ENCODE measurements at regions of chr5 and their contacts with region 1.

Region 1: DNA sequence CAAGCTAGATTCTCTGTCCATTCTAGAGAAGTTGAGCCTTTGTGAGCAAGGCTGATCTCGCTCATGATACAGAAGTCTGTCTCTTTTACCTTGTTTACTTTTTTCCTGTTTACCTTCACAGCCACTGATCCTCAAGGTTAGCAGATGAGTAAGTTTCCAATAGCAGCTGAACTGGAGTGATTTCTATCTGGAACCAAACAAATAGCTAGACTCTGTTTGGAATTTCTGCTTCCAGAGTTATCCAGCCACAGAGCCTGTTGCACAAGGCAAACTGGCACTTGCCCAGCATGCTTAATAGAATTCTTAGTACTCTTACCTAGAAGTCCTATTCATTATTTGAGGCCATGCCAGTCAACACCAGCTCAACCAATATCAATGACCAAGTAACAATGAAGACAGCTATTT is 12.8 kb upstream of the PANK3 start:
- DNase-seq: no peak
- ATAC-seq: no peak
- H3K4me3 ChIP-seq: no peak overlapping the region
- H3K27ac ChIP-seq: no peak overlapping the region
- H3K4me1 ChIP-seq: no peaks in the 10 kb centered on the region
- H3K27me3 ChIP-seq: peaks cover 6% of the 10 kb centered on the region
- CTCF ChIP-seq: no peak

Region 2: GRCh38 chr5:168317521-168318147 is 274.4 kb before region 1 on chr5:
- CTCF ChIA-PET with region 1: interaction called, 10 read pairs
- POLR2A ChIA-PET with region 1: no interaction called
- in situ Hi-C with region 1: no loop called
- intact Hi-C with region 1: no loop called
- DNase-seq: peak; percentile 53
- ATAC-seq: peak; percentile 50
- H3K4me3 ChIP-seq: no peak overlapping the region
- H3K27ac ChIP-seq: peak overlapping the region; percentile 19; the same call in 1 of the 2 replicates
- H3K4me1 ChIP-seq: peaks cover 28% of the 10 kb centered on the region
- H3K27me3 ChIP-seq: no peaks in the 10 kb centered on the region
- CTCF ChIP-seq: no peak

Region 3: DNA sequence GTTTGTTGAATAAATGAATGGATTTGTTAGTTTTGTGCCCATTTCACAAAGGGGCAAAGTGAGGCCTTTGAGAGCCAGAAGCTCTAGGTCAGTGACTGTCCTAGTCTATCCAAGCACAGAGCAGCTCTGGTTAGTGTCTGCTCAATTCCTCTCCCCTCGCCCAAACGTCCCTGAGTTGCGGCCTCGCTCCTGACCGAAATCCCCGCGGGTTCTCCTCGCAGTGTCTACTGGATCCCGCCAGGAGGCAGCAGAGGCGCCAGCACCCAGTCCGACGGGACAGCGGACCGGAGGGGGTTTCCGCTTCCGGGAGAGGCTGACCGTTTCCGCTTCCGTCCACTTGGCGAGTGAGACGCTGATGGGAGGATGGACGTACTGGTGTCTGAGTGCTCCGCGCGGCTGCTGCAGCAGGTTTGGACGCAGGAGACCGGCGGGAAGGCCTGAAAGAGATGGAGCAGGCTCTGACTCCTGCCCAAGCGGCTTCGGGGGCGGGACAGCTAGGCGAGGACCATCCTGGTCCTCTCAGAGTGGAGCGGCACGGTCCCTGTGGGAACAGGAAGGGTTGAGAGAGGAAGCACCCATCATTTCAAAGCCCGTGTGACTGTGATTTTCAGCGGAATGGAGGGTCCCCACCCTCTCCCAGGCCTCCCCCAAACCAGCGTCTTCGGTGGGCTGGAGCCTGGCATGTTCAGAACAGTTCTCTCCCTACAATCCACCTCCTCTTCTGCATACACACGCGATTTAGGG is 105.7 kb before region 1 on chr5 and contains the start of gene RARS1:
- CTCF ChIA-PET with region 1: interaction called, 11 read pairs
- POLR2A ChIA-PET with region 1: no interaction called
- in situ Hi-C with region 1: no loop called
- intact Hi-C with region 1: no loop called
- DNase-seq: peak; percentile 90
- ATAC-seq: peak; percentile 99
- H3K4me3 ChIP-seq: peak within 1 kb of the TSS; percentile 95 to 99
- H3K27ac ChIP-seq: peak within 1 kb of the TSS; percentile 93
- H3K4me1 ChIP-seq: no peaks in the 10 kb centered on the region; the same call in 1 of the 2 replicates
- H3K27me3 ChIP-seq: no peaks in the 10 kb centered on the region
- CTCF ChIP-seq: peak; percentile 98
- total RNA-seq, gene RARS1: 128 TPM